ENCODE measurements at regions of chr15 and their contacts with region 1.

Region 1: GRCh38 chr15:41283653-41284426 is 48.6 kb downstream of the OIP5 start:
- DNase-seq: peak; percentile 94 to 98 (median 97)
- ATAC-seq: peak; percentile 98
- H3K4me3 ChIP-seq: peak overlapping the region; percentile 89
- H3K4me3 Mint-ChIP-seq: peak overlapping the region; percentile 90 to 100 (median 92)
- H3K27ac ChIP-seq: peak overlapping the region; percentile 91
- H3K27ac Mint-ChIP-seq: peak overlapping the region; percentile 96 to 99 (median 97)
- H3K4me1 ChIP-seq: peaks cover 21 to 31% of the 10 kb centered on the region in 2 donors
- H3K4me1 Mint-ChIP-seq: peaks cover 22 to 54% (median 51%) of the 10 kb centered on the region in 7 donors
- H3K27me3 ChIP-seq: no peaks in the 10 kb centered on the region
- H3K27me3 Mint-ChIP-seq: peaks cover 0 to 2% (median 0%) of the 10 kb centered on the region in 5 donors

Region 2: GRCh38 chr15:40952901-40953712 is 330.7 kb before region 1 on chr15 and contains the start of gene CHAC1:
- CTCF ChIA-PET with region 1: no interaction called
- POLR2A ChIA-PET with region 1: no interaction called
- intact Hi-C with region 1: loop called in 1 of 2 experiments (anchors 1 kb)
- DNase-seq: peak; percentile 79 to 97 (median 94)
- ATAC-seq: peak; percentile 98
- H3K4me3 ChIP-seq: peak within 1 kb of the TSS; percentile 68
- H3K4me3 Mint-ChIP-seq: peak within 1 kb of the TSS; percentile 87 to 96 (median 94)
- H3K27ac ChIP-seq: peak within 1 kb of the TSS; percentile 74
- H3K27ac Mint-ChIP-seq: peak within 1 kb of the TSS in 8 of 9 donors; percentile 76 to 95 (median 88)
- H3K4me1 ChIP-seq: peaks cover 10 to 14% of the 10 kb centered on the region in 2 donors
- H3K4me1 Mint-ChIP-seq: peaks cover 7 to 34% (median 19%) of the 10 kb centered on the region in 7 donors
- H3K27me3 ChIP-seq: no peaks in the 10 kb centered on the region
- H3K27me3 Mint-ChIP-seq: peaks cover 0 to 4% (median 0%) of the 10 kb centered on the region in 5 donors
- total RNA-seq, gene CHAC1: 0.24 to 5.7 (median 1.1) TPM

Region 3: DNA sequence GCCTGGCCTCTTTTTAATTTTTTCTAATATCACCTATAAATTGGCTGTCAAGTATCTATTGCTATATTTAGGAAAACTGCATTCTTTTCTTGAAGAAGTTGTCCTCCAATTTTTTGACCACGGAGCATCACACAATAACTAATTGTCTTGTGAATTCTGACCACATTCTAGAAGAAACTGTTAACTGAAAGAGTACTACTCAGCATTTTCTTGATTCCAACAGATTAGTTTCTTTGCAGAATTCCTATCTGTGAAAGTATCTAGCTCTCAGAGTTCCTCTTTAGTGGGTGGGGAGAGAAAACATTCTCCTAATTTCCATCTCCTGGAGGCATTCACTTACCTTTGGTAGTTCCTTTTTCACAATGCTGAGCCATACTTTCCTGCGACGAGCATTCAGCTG is 198.8 kb before region 1 on chr15:
- CTCF ChIA-PET with region 1: no interaction called
- POLR2A ChIA-PET with region 1: no interaction called
- intact Hi-C with region 1: no loop called
- DNase-seq: no peak
- ATAC-seq: no peak
- H3K4me3 ChIP-seq: no peak overlapping the region
- H3K4me3 Mint-ChIP-seq: no peak overlapping the region
- H3K27ac ChIP-seq: no peak overlapping the region
- H3K27ac Mint-ChIP-seq: no peak overlapping the region
- H3K4me1 ChIP-seq: no peaks in the 10 kb centered on the region
- H3K4me1 Mint-ChIP-seq: peaks cover 0 to 21% (median 0%) of the 10 kb centered on the region in 7 donors
- H3K27me3 ChIP-seq: no peaks in the 10 kb centered on the region
- H3K27me3 Mint-ChIP-seq: no peaks in the 10 kb centered on the region

Region 4: GRCh38 chr15:41401904-41402267 is 118.0 kb after region 1 on chr15:
- CTCF ChIA-PET with region 1: no interaction called
- POLR2A ChIA-PET with region 1: no interaction called
- intact Hi-C with region 1: loop called in 1 of 2 experiments (anchors 1 kb)
- DNase-seq: no peak
- ATAC-seq: no peak
- H3K4me3 ChIP-seq: peak overlapping the region; percentile 92
- H3K4me3 Mint-ChIP-seq: peak overlapping the region; percentile 87 to 97 (median 96)
- H3K27ac ChIP-seq: peak overlapping the region; percentile 81
- H3K27ac Mint-ChIP-seq: peak overlapping the region; percentile 89 to 96 (median 94)
- H3K4me1 ChIP-seq: peaks cover 0 to 14% of the 10 kb centered on the region in 2 donors
- H3K4me1 Mint-ChIP-seq: peaks cover 0 to 32% (median 24%) of the 10 kb centered on the region in 7 donors
- H3K27me3 ChIP-seq: no peaks in the 10 kb centered on the region
- H3K27me3 Mint-ChIP-seq: no peaks in the 10 kb centered on the region

Region 5: DNA sequence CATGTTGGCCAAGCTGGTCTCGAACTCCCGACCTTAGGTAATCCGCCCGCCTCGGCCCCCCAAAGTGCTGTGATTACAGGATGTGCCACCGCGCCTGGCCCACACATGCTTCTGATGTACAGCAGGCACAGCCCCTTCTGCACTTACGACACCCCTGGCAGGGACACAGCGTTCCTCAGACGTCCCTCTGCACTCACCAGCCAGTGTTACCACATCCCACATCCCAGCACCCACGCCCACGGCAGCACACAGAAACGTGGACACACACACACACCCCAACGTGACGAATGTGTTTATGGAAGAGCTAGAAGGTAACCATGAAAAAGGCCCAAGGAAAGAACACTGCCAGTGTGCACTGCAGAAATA is 260.8 kb after region 1 on chr15:
- CTCF ChIA-PET with region 1: no interaction called
- POLR2A ChIA-PET with region 1: no interaction called
- intact Hi-C with region 1: loop called in 1 of 2 experiments (anchors 5 kb)
- DNase-seq: peak in 1 of 9 donors; percentile 1
- ATAC-seq: no peak
- H3K4me3 ChIP-seq: peak overlapping the region; percentile 96
- H3K4me3 Mint-ChIP-seq: peak overlapping the region; percentile 92 to 96 (median 94)
- H3K27ac ChIP-seq: peak overlapping the region; percentile 94
- H3K27ac Mint-ChIP-seq: peak overlapping the region in 8 of 9 donors; percentile 62 to 95 (median 92)
- H3K4me1 ChIP-seq: peaks cover 0 to 6% of the 10 kb centered on the region in 2 donors
- H3K4me1 Mint-ChIP-seq: peaks cover 0 to 31% (median 19%) of the 10 kb centered on the region in 7 donors
- H3K27me3 ChIP-seq: no peaks in the 10 kb centered on the region
- H3K27me3 Mint-ChIP-seq: peaks cover 0 to 4% (median 0%) of the 10 kb centered on the region in 5 donors